ENCODE measurements at regions of chr13 and their contacts with region 1.

Region 1: DNA sequence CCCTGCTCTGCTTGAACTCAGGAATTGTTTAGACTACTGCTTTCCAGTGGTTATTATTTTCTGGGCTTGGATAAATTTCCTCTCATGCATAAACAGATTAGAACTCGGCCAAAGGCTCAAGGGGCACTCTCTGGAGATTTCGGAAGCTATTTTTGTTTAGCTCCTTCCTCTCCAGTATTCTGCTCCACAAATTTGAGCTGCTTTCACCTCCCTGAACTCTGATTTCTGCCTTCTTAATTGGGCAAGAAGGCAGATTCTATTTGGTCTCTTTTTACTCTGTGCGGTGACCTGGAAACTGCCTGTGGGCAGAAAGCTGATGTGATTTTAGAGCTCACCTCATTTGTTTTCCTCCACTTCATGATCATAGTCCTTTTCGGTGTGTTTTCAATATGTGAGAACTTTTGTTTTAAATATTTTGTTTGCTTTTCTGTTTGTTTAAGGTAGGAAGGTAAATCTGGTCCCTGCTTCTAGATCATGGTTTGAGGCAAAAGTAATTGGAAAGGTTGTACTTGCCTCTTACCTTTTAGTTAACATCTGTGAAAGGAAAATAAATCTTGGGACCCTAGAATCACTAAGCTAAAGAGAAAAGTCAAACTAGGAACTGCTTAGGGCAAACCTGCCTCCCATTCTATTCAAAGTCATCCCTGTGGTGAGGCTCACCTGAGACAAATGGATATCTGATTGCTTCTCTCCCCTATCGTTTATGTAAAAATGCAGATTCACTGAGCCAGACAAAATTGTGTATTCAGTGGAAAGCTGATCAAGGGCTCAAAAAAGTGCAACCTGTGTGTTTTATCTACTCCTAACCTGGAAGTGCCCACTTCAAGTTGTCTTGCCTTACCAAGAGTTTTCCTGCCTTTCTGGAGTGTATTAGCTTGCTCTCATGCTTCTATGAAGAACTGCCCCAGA is 714.7 kb upstream of the PCDH20 start:
- DNase-seq: no peak
- CTCF ChIP-seq: no peak

Region 2: DNA sequence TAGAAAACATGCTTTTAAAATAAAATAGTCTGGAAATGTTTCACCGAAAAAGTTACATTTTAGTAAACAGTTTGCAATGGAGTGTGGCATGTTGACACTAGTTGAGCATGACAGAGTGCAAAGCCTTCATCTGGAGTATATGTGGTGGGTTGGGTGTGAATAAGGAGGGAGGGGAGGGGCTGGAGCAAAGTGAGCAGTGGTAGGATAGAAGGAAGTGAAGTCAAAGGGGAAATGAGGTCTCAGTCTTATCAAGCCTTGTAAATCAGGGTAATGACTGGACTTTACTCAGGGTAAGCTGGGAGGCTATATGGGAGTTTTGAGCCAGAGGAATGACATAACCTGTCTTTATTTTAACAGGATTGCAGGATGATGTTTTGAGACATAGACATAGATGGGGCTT is 937.5 kb before region 1 on chr13:
- in situ Hi-C with region 1: no loop called
- DNase-seq: no peak
- CTCF ChIP-seq: no peak

Region 3: DNA sequence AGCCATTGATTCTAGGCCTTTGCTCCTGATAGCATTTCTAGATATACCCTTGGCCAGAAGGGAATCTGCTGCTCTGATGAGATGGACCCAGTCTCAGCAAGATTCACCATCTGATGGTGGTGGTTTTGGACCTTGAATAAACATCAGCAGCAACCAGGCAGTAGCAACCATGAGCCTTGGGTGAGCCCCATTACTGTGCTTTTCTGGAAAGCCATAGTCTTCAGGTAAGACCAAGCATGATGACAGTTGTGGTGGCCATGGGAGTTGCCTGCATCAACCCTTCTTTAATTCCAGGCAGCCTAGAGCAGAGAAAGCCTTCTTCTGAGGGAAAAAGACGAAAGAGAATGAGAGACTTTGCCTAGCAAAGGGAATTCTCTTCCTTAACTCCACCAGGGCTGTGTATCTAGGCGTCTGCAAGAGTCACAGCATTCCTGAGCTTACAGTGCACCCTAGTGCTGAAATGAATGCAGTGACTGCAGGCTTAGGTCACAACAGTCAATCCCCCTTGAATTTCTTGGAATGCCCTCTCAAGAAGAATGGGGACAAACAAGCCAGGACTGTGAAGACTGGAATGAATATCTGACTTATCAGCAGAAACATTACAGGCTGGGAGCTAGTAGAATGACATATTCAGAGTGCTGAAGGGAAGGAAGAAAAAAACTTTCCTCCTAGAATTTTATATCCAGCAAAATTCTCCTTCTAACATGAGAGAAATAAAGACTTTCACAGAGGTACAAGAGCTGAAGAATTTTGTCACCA is 227.8 kb after region 1 on chr13:
- in situ Hi-C with region 1: loop called (anchors 25 kb)
- DNase-seq: peak; percentile 18
- CTCF ChIP-seq: peak; percentile 74